CD8-positive, alpha-beta memory T cell (primary cell): ENCODE measurements at regions of chr5 and their contacts with region 1.

Region 1: DNA sequence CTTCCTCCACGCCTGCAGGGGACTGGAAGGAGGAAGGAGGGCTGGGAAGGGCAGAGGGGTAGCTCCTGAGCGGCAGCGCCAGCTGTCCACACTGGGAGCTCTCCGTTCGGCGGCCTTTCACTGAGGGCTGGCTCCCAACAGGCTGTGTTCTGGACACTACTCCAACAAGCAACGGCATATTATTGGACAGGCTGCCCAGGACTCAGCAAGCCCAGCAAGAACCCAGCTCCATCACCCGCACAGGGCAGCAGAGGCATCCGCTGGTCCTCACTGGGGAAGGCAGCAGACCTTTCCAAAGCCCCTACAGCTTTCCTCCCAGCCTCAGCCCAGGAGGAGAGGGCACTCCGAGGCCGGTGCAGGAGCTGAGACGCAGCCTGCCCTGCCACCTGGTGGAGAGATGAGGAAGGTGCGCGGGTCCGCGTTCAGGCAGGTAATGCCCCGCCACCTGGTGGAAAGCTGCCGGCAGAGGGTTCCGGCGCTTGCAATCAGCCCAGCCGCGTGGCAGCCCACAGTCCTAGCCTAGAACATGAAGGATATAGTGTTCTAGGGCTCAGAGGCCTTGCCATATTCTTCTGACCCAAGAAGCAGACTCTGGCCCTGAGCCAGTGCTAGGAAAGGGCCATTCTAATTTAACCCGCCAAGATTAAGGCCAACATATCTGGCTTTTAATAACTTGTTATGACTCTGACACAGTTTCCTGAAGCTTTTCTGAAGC is 74.4 kb downstream of the NRG2 start:
- DNase-seq: peak; percentile 76 to 87 (median 80)
- H3K4me3 ChIP-seq: no peak overlapping the region
- H3K4me3 Mint-ChIP-seq: no peak overlapping the region
- H3K27ac ChIP-seq: no peak overlapping the region
- H3K27ac Mint-ChIP-seq: no peak overlapping the region
- H3K4me1 ChIP-seq: no peaks in the 10 kb centered on the region
- H3K4me1 Mint-ChIP-seq: peaks cover 0 to 3% (median 0%) of the 10 kb centered on the region in 3 donors
- H3K27me3 ChIP-seq: no peaks in the 10 kb centered on the region
- H3K27me3 Mint-ChIP-seq: peaks cover 11 to 32% of the 10 kb centered on the region in 2 donors

Region 2: DNA sequence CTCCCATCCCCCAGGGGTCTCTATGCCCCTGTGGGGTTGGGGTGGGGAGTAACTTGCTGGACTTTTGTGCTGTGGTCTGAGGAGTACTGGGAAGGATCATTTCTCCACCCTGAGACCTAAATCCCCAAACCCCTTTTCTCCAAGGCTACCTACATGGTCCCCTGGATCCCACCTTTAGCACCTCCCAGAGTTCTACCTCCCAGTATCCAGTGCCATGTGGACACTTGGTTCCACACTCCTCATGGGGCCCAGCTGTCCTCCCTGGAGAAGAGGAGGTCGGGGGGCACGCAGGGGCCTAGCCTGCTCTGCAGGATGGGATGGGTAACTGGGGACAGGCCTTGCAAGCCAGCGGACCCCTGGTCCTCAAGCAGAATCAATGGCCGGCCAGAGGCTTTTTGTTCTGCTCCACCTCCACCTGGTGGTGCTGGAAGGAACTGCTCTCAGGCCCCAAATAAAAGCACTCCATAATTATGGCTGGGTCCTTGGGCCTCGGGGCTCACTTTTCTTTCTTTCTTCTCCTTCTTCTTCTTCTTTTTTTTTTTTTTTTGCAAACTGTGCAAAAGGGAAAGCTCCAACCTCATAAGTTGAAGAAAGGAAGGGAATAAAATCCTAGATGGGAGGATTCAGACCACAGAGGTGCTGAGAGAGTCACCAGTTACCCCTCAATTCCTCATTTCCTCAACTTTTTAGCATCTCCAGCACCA is 104.7 kb before region 1 on chr5:
- CTCF ChIA-PET with region 1: interaction called, 10 read pairs
- POLR2A ChIA-PET with region 1: no interaction called
- DNase-seq: peak; percentile 22 to 67 (median 44)
- H3K4me3 ChIP-seq: no peak overlapping the region
- H3K4me3 Mint-ChIP-seq: no peak overlapping the region
- H3K27ac ChIP-seq: no peak overlapping the region
- H3K27ac Mint-ChIP-seq: no peak overlapping the region
- H3K4me1 ChIP-seq: no peaks in the 10 kb centered on the region
- H3K4me1 Mint-ChIP-seq: no peaks in the 10 kb centered on the region
- H3K27me3 ChIP-seq: no peaks in the 10 kb centered on the region
- H3K27me3 Mint-ChIP-seq: peaks cover 12 to 36% of the 10 kb centered on the region in 2 donors

Region 3: GRCh38 chr5:139942243-139942642 is 26.5 kb before region 1 on chr5:
- CTCF ChIA-PET with region 1: interaction called, 13 read pairs
- POLR2A ChIA-PET with region 1: no interaction called
- DNase-seq: no peak
- H3K4me3 ChIP-seq: no peak overlapping the region
- H3K4me3 Mint-ChIP-seq: no peak overlapping the region
- H3K27ac ChIP-seq: no peak overlapping the region
- H3K27ac Mint-ChIP-seq: no peak overlapping the region
- H3K4me1 ChIP-seq: no peaks in the 10 kb centered on the region
- H3K4me1 Mint-ChIP-seq: no peaks in the 10 kb centered on the region
- H3K27me3 ChIP-seq: no peaks in the 10 kb centered on the region
- H3K27me3 Mint-ChIP-seq: peaks cover 19 to 64% of the 10 kb centered on the region in 2 donors

Region 4: DNA sequence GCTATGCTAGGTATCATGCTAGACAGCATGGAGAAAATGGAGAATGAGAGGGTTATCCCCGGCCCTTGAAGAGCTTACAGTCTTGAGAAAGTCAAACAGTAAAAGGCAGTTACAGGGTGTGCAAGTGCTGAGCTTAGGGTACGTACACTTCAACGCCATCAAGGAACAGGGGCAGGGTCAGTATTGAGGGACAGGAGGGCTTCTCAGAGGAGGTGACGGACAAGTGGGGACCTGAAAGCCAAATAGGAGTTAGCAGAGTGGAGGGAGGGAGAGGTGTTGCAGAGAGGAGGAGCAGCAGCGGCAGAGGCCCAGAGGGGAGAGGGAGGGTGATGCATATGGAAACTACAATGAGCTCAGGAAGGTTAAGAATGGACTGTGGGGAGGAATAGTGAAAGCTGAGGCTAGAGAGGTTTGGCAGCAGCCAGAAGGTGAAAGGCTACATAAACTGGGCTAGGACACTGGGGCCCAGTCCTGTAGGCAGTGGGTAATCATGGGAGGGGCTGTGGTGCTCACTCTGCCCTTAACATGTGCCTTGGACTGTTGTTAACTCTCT is 13.6 kb before region 1 on chr5:
- CTCF ChIA-PET with region 1: interaction called, 42 read pairs
- POLR2A ChIA-PET with region 1: no interaction called
- DNase-seq: no peak
- H3K4me3 ChIP-seq: no peak overlapping the region
- H3K4me3 Mint-ChIP-seq: no peak overlapping the region
- H3K27ac ChIP-seq: no peak overlapping the region
- H3K27ac Mint-ChIP-seq: no peak overlapping the region
- H3K4me1 ChIP-seq: no peaks in the 10 kb centered on the region
- H3K4me1 Mint-ChIP-seq: no peaks in the 10 kb centered on the region
- H3K27me3 ChIP-seq: no peaks in the 10 kb centered on the region
- H3K27me3 Mint-ChIP-seq: peaks cover 23 to 51% of the 10 kb centered on the region in 2 donors

Region 5: DNA sequence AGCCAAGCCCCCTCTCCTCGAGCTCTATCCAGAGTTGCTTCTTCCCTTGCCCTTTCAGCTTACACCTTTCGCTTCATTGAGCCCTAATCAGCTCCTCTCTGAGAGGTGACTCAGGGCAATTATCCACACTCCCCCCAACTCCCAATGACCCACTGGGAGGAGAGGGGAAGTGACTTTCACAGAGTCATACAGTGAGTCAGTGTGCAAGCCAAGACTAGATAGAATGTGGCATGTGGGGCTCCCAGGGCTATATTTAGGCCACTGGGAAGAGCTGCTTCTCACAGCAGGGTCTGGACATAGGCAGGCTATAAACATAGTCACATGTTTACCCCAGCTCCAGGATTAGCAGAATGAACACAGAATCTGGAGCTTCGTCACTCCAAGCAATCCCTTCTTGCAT is 17.0 kb after region 1 on chr5:
- CTCF ChIA-PET with region 1: interaction called, 37 read pairs
- POLR2A ChIA-PET with region 1: no interaction called
- DNase-seq: no peak
- H3K4me3 ChIP-seq: no peak overlapping the region
- H3K4me3 Mint-ChIP-seq: no peak overlapping the region
- H3K27ac ChIP-seq: no peak overlapping the region
- H3K27ac Mint-ChIP-seq: no peak overlapping the region
- H3K4me1 ChIP-seq: no peaks in the 10 kb centered on the region
- H3K4me1 Mint-ChIP-seq: no peaks in the 10 kb centered on the region
- H3K27me3 ChIP-seq: no peaks in the 10 kb centered on the region
- H3K27me3 Mint-ChIP-seq: peaks cover 8 to 41% of the 10 kb centered on the region in 2 donors